B cell (primary cell): ENCODE measurements at regions of chr2 and their contacts with region 1.

Region 1: DNA sequence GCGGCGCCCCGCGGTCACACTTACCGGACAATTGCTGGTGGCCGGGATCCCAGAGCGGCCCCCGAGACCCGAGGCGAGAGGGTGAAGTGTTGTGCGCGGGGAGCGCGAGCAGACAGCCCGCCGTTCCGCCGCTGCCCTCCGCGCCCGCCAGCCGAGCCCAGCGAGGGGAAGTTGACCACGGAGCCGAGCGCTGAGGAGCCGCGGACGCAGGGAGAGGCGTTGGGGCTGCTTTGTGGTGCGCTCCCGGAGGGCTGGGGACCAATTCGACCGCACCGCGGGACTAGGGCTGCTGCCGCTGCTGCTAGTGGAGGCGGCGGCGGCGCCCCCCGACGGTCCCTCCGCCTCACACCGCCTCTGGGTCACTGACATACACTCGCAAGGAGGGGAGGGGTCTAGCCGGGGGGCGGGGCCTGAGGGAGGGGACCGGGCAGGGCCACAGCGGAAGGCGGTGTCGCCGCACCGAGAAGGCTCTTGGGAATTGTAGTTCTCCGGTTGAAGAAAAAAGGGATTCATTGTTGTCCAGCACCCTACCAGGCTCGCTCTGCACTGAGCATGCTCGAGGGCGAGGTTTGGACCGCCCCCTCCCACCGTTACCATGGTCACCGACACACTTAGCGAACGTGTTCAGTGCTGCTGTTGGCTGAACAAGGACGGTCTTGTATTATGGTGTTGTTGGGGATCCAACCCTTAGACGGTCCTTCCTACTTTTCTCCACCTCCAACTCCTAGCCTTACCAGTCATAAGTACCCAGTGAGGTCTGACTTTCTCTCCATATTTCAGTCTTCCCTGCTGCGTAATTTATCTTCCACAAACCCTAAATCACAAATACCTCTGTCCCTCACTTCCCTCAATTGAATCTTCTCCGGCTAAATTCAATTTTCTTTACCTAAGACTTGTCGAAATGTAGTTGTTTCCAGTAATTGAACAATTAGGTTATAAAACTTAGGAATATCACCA is at the start of gene PELI1:
- DNase-seq: peak; percentile 95
- ATAC-seq: peak; percentile 95
- H3K4me3 ChIP-seq: peak within 1 kb of the TSS; percentile 77 to 98 (median 85)
- H3K4me3 Mint-ChIP-seq: peak within 1 kb of the TSS; percentile 92
- H3K27ac ChIP-seq: peak within 1 kb of the TSS; percentile 81 to 86
- H3K27ac Mint-ChIP-seq: peak within 1 kb of the TSS; percentile 94
- H3K4me1 ChIP-seq: peaks cover 22 to 32% of the 10 kb centered on the region in 2 donors
- H3K4me1 Mint-ChIP-seq: peaks cover 38% of the 10 kb centered on the region
- H3K27me3 ChIP-seq: no peaks in the 10 kb centered on the region
- H3K27me3 Mint-ChIP-seq: no peaks in the 10 kb centered on the region
- CTCF ChIP-seq: peak; percentile 10
- total RNA-seq, gene PELI1: 115 and 117 TPM in 2 replicates

Region 2: GRCh38 chr2:64052468-64053241 is 91.7 kb before region 1 on chr2:
- CTCF ChIA-PET with region 1: interaction called, 6 read pairs
- POLR2A ChIA-PET with region 1: no interaction called
- intact Hi-C with region 1: loop called (anchors 1 kb)
- DNase-seq: no peak
- ATAC-seq: no peak
- H3K4me3 ChIP-seq: no peak overlapping the region
- H3K4me3 Mint-ChIP-seq: no peak overlapping the region
- H3K27ac ChIP-seq: no peak overlapping the region
- H3K27ac Mint-ChIP-seq: no peak overlapping the region
- H3K4me1 ChIP-seq: peaks cover 10 to 12% of the 10 kb centered on the region in 2 donors
- H3K4me1 Mint-ChIP-seq: peaks cover 23% of the 10 kb centered on the region
- H3K27me3 ChIP-seq: no peaks in the 10 kb centered on the region
- H3K27me3 Mint-ChIP-seq: no peaks in the 10 kb centered on the region
- CTCF ChIP-seq: no peak

Region 3: DNA sequence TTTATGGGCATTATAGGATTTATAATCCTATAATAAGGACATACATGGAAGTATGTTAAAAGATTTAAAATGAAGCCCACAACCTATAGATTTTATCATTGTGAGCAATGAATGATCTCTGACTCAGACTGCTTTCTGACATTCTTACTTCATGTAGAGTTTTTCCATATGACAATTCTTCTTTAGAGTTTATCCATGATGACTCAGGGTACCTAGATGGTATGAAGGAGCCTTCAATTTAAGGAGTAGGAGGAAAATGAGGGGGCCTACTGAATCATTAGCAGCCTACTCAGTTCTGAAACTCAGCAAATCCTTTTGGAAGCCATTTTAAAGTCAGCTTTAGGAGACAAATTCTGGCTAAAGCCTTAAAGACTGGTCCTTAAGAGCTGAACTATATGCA is 10.5 kb before region 1 on chr2:
- CTCF ChIA-PET with region 1: no interaction called
- POLR2A ChIA-PET with region 1: no interaction called
- intact Hi-C with region 1: loop called (anchors 1 kb)
- DNase-seq: no peak
- ATAC-seq: no peak
- H3K4me3 ChIP-seq: no peak overlapping the region
- H3K4me3 Mint-ChIP-seq: no peak overlapping the region
- H3K27ac ChIP-seq: no peak overlapping the region
- H3K27ac Mint-ChIP-seq: no peak overlapping the region
- H3K4me1 ChIP-seq: peaks cover 13 to 17% of the 10 kb centered on the region in 2 donors
- H3K4me1 Mint-ChIP-seq: peaks cover 63% of the 10 kb centered on the region
- H3K27me3 ChIP-seq: no peaks in the 10 kb centered on the region
- H3K27me3 Mint-ChIP-seq: no peaks in the 10 kb centered on the region
- CTCF ChIP-seq: no peak

Region 4: DNA sequence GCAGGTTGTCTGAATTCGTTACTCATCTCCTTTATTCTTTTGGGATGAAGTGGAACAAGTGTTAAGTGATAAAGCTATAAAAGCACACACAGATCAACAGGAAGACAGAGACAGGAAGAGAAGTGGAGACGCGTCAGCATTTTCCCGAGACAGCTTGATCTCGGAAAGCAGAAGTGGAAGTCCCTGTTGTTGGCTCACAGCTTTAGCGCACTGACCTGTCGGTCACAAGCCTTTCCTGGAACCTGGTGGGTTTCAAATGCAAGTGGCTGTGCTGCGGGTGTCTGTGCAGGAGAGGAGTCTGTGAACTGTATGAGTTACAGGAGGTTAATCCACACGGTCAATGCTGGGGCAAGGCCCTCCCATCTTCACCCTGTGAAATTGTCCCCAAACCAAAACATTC is 116.5 kb after region 1 on chr2:
- CTCF ChIA-PET with region 1: no interaction called
- POLR2A ChIA-PET with region 1: no interaction called
- intact Hi-C with region 1: loop called (anchors 1 kb)
- DNase-seq: peak; percentile 82
- ATAC-seq: peak; percentile 94
- H3K4me3 ChIP-seq: peak overlapping the region; percentile 2 to 51 (median 38)
- H3K4me3 Mint-ChIP-seq: peak overlapping the region; percentile 74
- H3K27ac ChIP-seq: peak overlapping the region; percentile 46 to 85
- H3K27ac Mint-ChIP-seq: peak overlapping the region; percentile 87
- H3K4me1 ChIP-seq: peaks cover 26 to 31% of the 10 kb centered on the region in 2 donors
- H3K4me1 Mint-ChIP-seq: peaks cover 50% of the 10 kb centered on the region
- H3K27me3 ChIP-seq: no peaks in the 10 kb centered on the region
- H3K27me3 Mint-ChIP-seq: no peaks in the 10 kb centered on the region
- CTCF ChIP-seq: no peak